Activated T-helper 1 cell treated with anti-CD3 and anti-CD28 coated beads, Interleukin-12 subunit alpha, Interleukin-12 subunit beta, Interleukin-2, Interleukin-4 antibody, amounts not matched to agents 30 ng/mL and 10 ng/mL and 1 ng/mL, durations not matched to agents 14 hours and 24 hours and 36 hours (primary cell): ENCODE measurements at regions of chr18 and their contacts with region 1.

Region 1: DNA sequence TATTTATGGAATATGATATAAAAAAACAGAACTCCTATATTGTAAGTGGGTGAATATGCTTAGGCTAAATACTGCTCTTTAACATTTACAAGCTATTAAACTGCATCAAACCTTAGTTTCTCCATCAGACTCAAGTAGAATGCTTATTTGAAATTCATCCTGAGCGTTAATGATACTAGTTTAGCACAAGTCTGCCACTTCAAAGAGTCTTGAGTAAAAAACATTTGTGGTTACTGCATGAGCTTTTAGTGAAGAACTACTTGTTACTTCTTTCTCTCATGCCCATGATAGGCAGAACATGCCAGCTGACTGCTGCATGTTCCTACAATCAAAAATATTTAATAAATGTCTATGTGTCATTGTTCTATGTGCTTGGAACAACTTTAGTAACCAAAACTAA is 12.1 kb downstream of the YES1 start:
- DNase-seq: no peak
- H3K4me3 Mint-ChIP-seq: no peak overlapping the region
- H3K27ac Mint-ChIP-seq: no peak overlapping the region
- H3K4me1 Mint-ChIP-seq: peaks cover 48% of the 10 kb centered on the region
- H3K27me3 Mint-ChIP-seq: no peaks in the 10 kb centered on the region

Region 2: DNA sequence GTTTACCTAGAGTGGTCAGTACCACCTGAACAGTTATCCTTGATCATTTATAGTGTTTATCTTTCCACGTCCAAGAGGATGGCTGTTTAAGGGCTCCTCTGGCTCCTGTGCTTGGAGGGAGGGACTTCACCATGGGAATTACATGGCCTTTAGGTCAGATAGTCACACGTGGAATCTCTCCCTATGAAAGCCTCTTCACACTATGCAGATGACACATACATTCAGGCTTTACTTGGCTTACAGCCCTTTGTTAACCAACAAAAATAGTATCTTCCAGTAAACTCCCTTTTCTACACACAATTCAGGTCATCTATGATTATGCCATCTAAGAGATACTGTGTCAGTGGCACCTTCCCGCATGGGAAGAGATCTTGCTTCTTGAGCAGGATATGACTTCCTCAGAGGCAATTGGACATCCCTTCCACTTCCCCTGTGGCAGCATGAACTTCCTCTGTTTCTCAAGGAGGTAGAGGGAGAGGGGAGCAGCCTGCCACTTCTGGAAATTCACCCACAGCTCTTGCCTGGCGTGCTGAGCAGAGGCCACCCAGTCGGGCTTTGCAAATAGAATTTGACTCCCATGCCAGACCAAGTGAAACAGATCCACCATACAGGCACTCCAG is 352.9 kb before region 1 on chr18:
- intact Hi-C with region 1: no loop called
- DNase-seq: no peak
- H3K4me3 Mint-ChIP-seq: no peak overlapping the region
- H3K27ac Mint-ChIP-seq: no peak overlapping the region
- H3K4me1 Mint-ChIP-seq: no peaks in the 10 kb centered on the region
- H3K27me3 Mint-ChIP-seq: no peaks in the 10 kb centered on the region

Region 3: DNA sequence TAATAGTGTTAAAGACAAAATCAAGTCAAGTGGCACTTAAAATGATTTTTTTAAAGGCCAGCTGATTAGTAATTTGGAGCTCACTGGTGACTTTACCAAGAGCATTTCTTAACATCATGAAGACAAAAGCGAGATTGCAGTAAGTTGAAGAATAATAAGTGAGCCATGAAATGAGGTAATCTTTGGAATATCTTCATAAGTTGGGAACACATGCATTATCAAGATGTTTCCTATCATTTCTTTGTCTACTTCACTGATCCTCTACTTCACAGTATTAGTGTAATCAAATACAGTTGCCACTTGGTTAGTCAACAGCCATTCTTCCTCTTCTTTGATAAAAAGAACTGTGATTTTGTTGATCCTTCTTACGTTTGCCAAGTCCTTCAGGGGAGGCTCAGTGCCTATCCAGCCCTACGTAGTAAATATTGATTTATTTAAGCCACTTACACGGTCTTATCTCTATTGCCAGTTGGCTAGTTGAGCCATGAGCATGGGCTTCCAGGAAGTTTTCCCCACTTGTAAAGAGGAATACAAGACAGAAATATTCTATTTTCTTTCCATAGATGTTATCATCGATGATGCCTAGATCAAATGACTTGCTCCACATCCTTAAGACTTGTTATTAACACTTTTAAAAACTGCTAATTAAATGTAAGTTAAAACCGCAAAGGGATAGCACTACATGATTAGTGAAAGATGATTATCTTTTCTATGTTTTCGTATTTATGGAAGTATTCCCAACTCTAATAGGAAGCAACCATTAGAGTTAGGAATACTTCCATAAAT is 34.0 kb before region 1 on chr18:
- intact Hi-C with region 1: loop called (anchors 5 kb)
- DNase-seq: no peak
- H3K4me3 Mint-ChIP-seq: no peak overlapping the region
- H3K27ac Mint-ChIP-seq: no peak overlapping the region
- H3K4me1 Mint-ChIP-seq: peaks cover 14% of the 10 kb centered on the region
- H3K27me3 Mint-ChIP-seq: no peaks in the 10 kb centered on the region

Region 4: DNA sequence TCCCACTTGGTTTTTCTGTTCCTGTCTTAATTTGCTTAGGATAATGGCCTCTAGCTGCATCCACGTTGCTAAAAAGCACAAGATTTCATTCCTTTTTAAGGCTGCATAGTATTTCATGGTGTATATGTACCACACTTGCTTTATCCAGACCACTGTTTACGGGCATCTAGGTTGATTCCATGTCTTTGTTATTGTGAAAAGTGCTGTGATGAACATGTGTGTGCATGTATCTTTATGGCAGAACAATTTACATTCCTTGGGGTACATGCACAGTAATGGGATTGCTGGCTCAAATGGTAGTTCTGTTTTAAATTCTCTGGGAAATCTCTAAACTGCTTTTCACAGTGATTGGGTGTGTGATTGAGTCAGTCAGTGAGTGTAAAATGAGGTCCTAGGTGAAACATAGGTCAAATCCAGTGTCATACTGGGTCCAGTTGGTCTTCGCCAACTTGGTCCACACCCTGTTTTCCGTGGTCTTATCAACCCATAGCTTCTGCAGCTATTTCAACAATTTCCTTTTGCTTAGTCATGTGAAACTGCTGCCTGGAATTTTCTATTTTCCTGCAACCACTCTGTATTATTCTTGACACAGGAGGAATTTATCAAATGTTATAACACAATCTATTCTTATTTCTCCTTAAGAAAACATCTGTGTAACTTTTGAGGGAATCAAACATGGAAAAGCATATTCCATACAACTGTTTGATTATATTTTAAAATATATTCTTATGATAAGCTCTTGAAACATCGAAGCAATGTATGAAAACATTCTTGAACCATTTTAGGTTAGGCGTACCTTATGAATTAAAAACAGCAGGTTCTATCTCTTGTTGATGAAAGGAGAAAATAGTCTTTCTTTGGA is 187.6 kb after region 1 on chr18:
- intact Hi-C with region 1: no loop called
- DNase-seq: no peak
- H3K4me3 Mint-ChIP-seq: no peak overlapping the region
- H3K27ac Mint-ChIP-seq: no peak overlapping the region
- H3K4me1 Mint-ChIP-seq: no peaks in the 10 kb centered on the region
- H3K27me3 Mint-ChIP-seq: no peaks in the 10 kb centered on the region

Region 5: DNA sequence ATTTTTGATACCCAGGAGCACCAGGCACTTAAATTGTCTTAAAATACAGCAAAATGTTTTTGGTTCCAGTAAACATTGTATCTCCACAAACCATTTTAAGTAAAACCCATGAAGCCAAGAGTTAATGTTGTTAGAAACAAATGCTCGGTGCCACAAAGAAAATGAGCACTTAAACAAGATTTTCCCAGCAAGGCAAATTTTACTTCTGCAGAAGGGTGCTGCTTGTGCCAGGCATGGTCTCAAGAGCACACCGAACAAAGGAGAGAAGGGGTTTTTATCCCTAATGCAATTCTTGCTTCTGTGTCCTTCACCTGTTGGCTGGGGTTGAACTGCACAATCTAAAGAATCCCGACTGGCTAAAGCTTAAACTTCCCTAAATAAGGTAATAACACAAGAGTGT is 391.4 kb after region 1 on chr18:
- intact Hi-C with region 1: no loop called
- DNase-seq: no peak
- H3K4me3 Mint-ChIP-seq: no peak overlapping the region
- H3K27ac Mint-ChIP-seq: no peak overlapping the region
- H3K4me1 Mint-ChIP-seq: no peaks in the 10 kb centered on the region
- H3K27me3 Mint-ChIP-seq: no peaks in the 10 kb centered on the region

Region 6: DNA sequence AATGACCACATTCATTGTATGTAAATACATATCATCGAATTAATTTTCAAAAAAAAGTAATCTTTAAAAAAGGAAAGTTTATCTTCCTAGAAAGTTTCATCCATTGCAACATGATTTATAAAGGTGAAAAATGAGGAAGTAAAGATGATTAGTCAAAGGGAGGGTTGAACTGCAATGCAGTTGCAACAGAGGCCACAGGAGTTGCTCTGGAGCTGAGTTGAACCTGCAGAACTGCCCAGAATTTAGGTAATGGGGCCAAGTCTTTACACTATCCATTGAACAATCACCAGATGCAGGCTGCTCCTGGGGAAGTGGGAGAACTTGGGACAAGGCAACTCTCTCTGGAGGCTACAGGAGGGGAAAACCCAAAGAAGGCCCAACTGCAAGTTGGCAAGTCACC is 1380.6 kb after region 1 on chr18:
- intact Hi-C with region 1: no loop called
- DNase-seq: no peak
- H3K4me3 Mint-ChIP-seq: no peak overlapping the region
- H3K27ac Mint-ChIP-seq: no peak overlapping the region
- H3K4me1 Mint-ChIP-seq: no peaks in the 10 kb centered on the region
- H3K27me3 Mint-ChIP-seq: no peaks in the 10 kb centered on the region